Activated naive CD4-positive, alpha-beta T cell treated with anti-CD3 and anti-CD28 coated beads for 36 hours (primary cell): ENCODE measurements at regions of chr2 and their contacts with region 1.

Region 1: DNA sequence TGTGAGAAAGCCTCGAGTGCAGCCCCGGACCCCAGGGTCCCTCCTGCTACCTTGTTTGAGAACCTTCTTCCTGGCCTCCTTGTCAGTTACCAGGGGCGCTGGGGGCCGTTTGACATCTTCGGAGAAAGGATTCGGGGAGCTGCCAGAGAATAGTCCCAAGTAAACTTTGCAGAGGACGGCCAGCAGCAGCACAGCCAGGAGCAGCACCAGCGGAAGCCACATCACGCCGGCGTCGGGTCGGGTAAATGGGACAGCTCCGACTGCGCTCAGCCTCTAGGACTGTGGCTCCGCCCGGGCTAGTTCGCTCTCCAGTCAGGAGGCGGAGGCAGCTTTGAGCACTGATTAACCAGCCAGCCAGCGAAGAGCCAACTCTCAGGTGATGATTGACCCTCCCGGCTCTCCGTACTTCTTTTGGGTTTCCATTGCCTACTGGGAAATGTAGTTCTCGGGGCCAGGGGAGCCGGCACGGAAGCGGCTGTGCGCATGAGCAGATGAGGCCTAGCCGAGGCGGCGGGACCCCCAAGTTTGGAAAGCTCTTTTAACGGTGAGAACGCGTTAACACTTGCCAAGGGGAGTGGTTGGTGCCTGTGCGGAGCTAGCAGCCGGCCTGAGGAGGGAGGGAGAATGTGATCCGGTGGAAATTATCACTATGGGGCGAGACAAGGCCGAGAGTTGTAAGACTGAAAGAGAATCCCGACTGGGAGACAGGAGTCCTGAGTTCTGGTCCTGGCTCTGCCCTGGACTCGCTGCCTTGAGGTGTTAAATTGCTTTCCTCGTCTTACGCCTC is at the starts of genes ELMOD3 and RETSAT:
- DNase-seq: peak; percentile 99
- H3K4me3 Mint-ChIP-seq: peak within 1 kb of the TSS; percentile 99
- H3K27ac Mint-ChIP-seq: peak within 1 kb of the TSS; percentile 96
- H3K4me1 Mint-ChIP-seq: peaks cover 36% of the 10 kb centered on the region
- H3K27me3 Mint-ChIP-seq: no peaks in the 10 kb centered on the region
- total RNA-seq, gene ELMOD3: 14.8 to 15.4 TPM
- total RNA-seq, gene RETSAT: 19.7 to 24.5 TPM

Region 2: DNA sequence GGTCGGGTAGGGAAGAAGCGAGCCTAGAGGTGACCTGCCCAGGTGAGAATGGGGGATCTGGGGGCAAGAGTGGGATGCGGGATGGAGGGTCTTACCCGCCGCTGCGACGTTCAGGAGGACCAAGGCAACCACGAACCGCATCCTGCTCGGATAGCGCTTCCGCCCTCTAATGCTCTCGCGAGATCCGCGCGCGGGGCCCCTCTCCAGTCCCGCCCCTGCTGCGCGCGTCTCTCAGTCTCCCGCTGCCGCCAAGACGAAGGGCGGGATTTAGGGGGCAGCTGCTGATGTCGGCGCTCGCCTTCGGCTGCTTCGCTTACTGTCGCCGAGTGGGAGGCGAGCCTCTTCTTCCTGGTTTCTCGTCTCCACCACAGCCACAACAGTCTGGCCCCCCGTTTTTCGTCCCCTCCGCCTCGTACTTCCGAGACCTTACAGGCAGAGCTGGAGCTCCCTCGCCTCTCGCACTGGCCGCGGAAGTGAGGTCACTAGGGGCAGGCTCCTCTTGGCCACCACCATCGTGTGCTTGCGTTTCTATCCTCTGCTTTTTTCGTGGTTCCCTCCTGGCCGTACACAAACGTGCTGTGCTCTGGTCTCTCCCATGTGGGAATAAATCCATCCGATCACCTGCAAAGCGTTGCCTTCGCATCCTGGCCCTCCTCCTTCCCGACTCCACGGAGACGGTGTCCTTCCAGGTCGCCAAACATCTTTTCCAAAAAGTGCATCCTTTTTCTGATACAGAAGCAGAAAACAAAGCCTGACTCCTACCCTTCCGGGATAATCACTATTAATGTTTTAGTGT is 26.5 kb before region 1 on chr2 and contains the start of gene TGOLN2:
- CTCF ChIA-PET with region 1: no interaction called
- intact Hi-C with region 1: loop called (anchors 1 kb)
- DNase-seq: peak; percentile 95
- H3K4me3 Mint-ChIP-seq: peak within 1 kb of the TSS; percentile 99
- H3K27ac Mint-ChIP-seq: peak within 1 kb of the TSS; percentile 99
- H3K4me1 Mint-ChIP-seq: peaks cover 25% of the 10 kb centered on the region
- H3K27me3 Mint-ChIP-seq: no peaks in the 10 kb centered on the region
- total RNA-seq, gene TGOLN2: 82.5 to 85.4 TPM

Region 3: DNA sequence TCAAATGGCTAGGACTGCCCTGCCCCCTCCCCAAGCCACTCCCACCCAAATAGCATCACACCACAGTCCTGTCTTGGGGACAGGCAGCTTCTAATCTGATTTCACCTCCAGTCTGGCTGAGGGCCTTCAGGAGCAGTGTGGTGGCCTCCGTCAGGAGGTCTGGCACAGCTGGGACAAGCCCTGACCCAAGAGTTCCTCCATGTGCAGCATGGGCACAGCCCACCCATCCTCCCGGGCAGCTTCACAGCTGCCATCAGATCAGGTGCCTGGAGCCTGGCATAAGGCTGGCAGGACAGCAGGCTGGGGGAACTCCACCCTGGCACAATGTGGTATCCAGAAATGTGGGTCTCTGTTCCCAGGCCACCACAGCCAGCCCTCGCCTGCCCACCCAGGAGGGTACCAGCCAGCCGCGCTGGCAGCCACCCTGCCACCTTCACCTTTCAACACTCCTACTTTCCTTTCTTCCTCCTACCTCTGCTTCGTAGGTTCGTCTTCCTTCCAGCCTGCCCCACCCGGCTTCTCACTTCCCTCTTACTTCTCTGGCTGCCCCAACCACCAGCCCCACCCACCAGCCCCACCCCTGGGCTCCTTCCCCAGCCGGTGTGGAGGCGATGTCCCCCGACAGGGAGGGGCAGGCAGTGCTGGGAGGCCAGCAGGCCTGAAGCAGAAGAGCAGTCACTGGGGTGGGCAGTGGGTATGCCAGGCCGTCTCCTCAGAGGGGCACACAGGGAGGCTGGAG is 55.5 kb after region 1 on chr2 and contains the start of gene CAPG:
- CTCF ChIA-PET with region 1: no interaction called
- intact Hi-C with region 1: loop called (anchors 1 kb)
- DNase-seq: peak; percentile 45
- H3K4me3 Mint-ChIP-seq: peak within 1 kb of the TSS; percentile 39
- H3K27ac Mint-ChIP-seq: no peak within 1 kb of the TSS
- H3K4me1 Mint-ChIP-seq: peaks cover 46% of the 10 kb centered on the region
- H3K27me3 Mint-ChIP-seq: peaks cover 10% of the 10 kb centered on the region
- total RNA-seq, gene CAPG: 10.2 to 10.7 TPM

Region 4: DNA sequence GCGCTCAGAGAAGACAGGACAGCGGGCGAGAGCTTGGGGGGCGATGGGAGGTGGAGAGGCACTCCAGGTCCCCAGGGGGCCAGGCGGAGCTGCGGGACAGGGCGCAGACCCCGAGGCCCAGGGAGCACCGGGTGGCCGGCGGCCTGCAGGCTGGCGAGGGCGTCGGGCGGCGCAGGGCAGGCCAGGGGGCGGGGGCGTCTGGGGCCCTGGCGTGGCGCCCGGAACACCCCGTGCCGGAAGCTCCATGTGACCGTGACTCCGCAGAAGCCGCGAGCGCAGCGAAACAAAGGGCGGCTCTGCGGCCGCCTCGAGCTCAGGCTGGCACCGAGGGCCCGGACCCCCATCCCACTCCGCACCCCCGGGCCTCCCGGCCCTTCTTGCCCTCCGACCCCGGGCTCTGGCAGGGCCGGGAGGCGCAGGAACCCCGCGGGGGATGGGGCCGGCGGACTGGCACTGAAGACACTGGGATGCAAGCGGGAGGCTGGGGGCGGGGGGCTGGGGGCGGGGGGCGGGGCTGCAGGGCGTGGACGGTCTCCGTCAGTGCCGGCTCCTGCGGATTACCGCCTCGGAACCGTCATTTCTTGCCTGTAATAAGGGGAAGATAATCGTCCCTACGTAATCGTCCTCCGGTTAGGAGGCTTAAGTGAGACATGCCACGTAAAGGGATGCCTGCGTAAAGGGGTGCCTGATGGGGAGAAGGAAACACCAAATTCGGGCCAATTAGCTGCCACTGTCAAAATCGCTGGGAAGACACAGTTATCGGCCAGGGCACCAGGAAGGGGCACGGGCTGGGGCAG is 83.2 kb after region 1 on chr2:
- CTCF ChIA-PET with region 1: no interaction called
- intact Hi-C with region 1: loop called (anchors 1 kb)
- DNase-seq: peak; percentile 87
- H3K4me3 Mint-ChIP-seq: peak overlapping the region; percentile 77
- H3K27ac Mint-ChIP-seq: peak overlapping the region; percentile 89
- H3K4me1 Mint-ChIP-seq: peaks cover 26% of the 10 kb centered on the region
- H3K27me3 Mint-ChIP-seq: no peaks in the 10 kb centered on the region

Region 5: DNA sequence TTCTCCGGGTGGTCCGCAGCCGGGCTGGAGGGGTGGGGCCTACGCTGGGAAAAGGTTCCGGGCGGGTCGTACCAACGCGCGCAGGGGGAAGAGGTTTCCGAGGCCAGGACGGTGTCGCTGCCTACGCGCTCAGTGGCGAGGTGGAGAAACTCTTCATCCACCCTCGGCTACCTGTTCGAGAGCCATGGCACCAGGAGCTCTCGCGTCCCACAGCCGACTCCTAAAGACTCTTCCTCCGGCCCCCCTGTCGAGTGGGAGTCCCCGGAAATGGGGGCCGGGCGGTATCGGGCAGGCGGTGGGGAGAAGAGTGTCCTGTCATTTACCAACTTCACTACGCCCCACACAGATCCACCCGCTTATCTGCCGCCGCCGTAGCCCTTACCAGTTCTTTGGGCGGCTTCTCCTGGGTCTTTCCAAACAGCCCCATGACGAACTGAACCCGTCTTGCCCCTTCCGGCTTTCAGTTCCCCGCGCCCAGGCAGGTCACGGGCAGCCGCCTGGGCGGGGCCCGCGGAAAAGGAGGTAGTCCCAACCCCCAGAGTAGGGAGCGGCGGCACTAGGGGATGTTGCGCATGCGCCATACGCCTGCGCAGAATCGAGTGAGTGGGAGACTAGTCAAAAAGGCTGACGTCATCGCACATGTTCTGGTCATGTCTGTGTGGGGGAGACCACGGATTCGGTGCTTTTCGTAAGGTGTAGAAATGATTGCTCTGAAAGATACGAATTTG is 1208.6 kb after region 1 on chr2 and contains the start of gene CHMP3:
- CTCF ChIA-PET with region 1: no interaction called
- intact Hi-C with region 1: no loop called
- DNase-seq: peak; percentile 97
- H3K4me3 Mint-ChIP-seq: peak within 1 kb of the TSS; percentile 92
- H3K27ac Mint-ChIP-seq: peak within 1 kb of the TSS; percentile 99
- H3K4me1 Mint-ChIP-seq: peaks cover 25% of the 10 kb centered on the region
- H3K27me3 Mint-ChIP-seq: no peaks in the 10 kb centered on the region
- total RNA-seq, gene CHMP3: 27.0 to 29.6 TPM